Esophagus muscularis mucosa (tissue), 4 donors: ENCODE measurements at regions of chr5 and their contacts with region 1.

Region 1: DNA sequence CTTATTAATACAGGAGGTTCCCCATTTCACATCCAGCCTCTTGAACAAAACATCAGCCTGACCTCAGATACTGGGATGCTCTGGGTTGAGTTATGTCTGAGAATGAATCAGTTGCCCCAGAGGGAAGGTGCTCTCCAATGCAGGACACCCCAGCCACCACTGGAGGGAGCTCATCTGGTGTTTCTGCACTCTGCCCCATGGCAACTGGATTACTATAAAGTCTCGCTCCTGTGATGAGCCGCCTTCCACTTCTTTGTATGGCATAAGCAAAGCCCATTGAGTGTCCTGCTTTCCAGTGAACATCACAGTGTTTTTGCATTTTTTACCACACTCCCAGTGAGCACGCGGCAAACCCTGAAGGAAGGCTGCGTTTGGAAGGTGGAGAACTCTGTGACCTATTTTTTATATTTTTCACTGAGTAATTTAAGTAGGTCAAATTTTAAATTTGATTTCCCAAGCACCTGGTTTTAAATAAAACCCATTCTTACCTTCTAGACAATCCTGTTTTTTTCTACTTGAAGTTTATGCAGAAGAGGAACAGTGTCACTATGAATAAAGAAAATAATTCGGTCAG is 176.9 kb upstream of the WWC1 start:
- DNase-seq: no peak
- H3K4me3 ChIP-seq: no peak overlapping the region
- H3K27ac ChIP-seq: no peak overlapping the region
- H3K4me1 ChIP-seq: peaks cover 0 to 3% (median 0%) of the 10 kb centered on the region in 4 donors
- H3K27me3 ChIP-seq: no peaks in the 10 kb centered on the region
- CTCF ChIP-seq: peak; percentile 38 to 46 (median 41)
- EP300 ChIP-seq: no peak
- POLR2A ChIP-seq: no peak

Region 2: GRCh38 chr5:167071981-167072610 is 1042.4 kb before region 1 on chr5:
- intact Hi-C with region 1: no loop called
- DNase-seq: no peak
- H3K4me3 ChIP-seq: no peak overlapping the region
- H3K27ac ChIP-seq: no peak overlapping the region
- H3K4me1 ChIP-seq: peaks cover 0 to 6% (median 3%) of the 10 kb centered on the region in 4 donors
- H3K27me3 ChIP-seq: no peaks in the 10 kb centered on the region
- CTCF ChIP-seq: no peak
- EP300 ChIP-seq: no peak
- POLR2A ChIP-seq: no peak

Region 3: GRCh38 chr5:168076561-168076991 is 38.0 kb before region 1 on chr5:
- intact Hi-C with region 1: no loop called
- DNase-seq: no peak
- H3K4me3 ChIP-seq: no peak overlapping the region
- H3K27ac ChIP-seq: no peak overlapping the region
- H3K4me1 ChIP-seq: peaks cover 0 to 4% (median 0%) of the 10 kb centered on the region in 4 donors
- H3K27me3 ChIP-seq: no peaks in the 10 kb centered on the region
- CTCF ChIP-seq: peak in 1 of 3 experiments; percentile 28
- EP300 ChIP-seq: no peak
- POLR2A ChIP-seq: no peak

Region 4: DNA sequence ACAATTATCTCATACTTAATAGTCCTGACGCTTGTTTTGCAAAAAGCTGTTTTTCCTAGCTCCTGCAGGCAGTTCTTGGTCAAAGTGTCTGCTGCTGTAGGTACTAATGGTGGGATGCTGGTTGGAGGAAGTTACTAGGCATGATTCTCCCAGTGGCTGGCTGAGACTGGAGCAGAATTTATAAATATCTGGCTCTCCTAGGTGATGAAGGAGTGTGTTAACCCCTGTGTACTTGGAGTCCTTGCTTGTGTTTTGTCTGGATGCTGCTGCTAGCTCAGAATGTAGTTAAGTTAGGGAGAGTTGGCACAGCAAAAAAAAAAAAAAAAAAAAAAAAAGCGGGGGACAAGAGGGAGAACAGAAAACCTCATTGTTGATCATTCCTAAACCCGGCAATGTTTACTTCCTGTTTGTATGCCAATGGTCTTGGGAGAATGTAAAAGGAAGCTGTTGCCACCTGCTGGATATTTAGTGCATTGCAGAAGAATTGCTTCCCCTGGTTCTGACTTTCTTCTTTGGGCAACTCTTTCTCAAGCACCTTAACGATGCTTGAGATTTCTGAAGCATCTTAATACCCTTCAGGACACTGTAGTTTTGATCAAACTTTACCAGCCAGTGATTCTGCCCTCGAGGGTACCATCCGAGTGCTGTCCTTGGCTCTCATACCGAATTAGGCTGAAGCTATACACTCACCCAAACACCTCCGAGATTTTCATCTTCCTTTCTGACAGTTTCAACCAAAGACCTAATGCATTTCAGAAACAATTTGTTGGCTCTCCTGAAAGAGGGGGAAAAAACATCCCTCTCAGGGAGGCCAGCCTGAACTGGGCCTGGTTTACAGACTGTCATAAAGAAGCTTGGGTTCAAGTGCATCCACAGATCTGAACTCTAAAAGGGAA is 105.2 kb after region 1 on chr5:
- intact Hi-C with region 1: loop called (anchors 10 kb)
- DNase-seq: no peak
- H3K4me3 ChIP-seq: peak overlapping the region in 1 of 4 donors; percentile 21
- H3K27ac ChIP-seq: no peak overlapping the region
- H3K4me1 ChIP-seq: peaks cover 3 to 7% (median 5%) of the 10 kb centered on the region in 4 donors
- H3K27me3 ChIP-seq: peaks cover 0 to 13% (median 0%) of the 10 kb centered on the region in 4 donors
- CTCF ChIP-seq: peak; percentile 81 to 90 (median 87)
- EP300 ChIP-seq: no peak
- POLR2A ChIP-seq: no peak